Activated CD8-positive, alpha-beta T cell treated with anti-CD3 and anti-CD28 coated beads, Interleukin-2, amount 10 ng/mL, durations not matched to agents 7 days and 5 days (primary cell): ENCODE measurements at regions of chr20 and their contacts with region 1.

Region 1: DNA sequence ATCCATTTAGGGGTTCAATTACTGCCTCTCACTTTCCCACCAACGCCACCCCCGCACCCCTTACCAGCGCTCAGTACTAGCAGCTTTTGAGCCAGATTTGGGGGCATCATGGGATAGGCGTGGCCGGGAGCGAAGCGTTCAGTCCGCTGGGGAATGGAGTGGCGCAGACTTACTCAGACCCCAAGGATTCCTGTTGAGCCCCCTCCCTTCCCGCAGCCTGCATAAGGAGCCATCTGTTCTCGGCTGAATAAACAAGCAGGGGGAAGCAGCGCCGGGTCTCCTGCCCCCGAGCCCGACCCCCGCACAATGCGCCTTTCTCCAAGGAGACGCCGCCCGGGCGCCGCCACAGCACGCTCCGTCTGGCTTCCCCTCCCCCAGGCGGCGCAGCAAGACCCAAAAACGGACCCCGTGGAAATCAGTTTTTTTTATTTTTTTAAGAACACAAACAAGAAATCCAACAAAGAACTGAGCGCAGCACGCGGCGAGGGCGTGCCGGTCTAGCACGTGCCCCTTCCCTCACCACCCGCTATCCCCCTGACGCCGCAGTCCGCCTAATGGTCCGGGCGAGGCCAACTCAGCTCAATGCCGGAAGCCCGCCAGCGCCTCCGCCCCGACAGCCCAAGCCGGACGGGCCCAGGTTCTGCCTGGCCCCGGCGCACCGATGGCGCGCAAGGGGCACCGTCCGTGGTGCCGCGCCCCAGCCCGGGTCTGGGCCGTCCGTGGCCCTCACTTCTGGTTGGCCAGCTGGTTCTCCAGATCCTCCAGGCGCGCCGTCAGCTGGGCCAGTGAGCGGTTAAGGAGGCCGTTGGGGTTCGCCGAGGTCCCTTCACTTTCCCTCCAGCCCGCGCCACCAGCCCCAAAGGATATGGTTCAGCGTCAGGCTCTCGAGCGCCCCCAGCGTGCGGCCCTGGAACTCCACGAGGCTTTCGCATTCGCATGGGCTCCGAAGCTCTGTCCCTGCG is 13.3 kb upstream of the RBPJL start:
- DNase-seq: peak; percentile 87
- ATAC-seq: peak; percentile 88
- H3K4me3 Mint-ChIP-seq: peak overlapping the region; percentile 65
- H3K27ac Mint-ChIP-seq: no peak overlapping the region
- H3K4me1 Mint-ChIP-seq: peaks cover 11% of the 10 kb centered on the region
- H3K27me3 Mint-ChIP-seq: peaks cover 29% of the 10 kb centered on the region

Region 2: DNA sequence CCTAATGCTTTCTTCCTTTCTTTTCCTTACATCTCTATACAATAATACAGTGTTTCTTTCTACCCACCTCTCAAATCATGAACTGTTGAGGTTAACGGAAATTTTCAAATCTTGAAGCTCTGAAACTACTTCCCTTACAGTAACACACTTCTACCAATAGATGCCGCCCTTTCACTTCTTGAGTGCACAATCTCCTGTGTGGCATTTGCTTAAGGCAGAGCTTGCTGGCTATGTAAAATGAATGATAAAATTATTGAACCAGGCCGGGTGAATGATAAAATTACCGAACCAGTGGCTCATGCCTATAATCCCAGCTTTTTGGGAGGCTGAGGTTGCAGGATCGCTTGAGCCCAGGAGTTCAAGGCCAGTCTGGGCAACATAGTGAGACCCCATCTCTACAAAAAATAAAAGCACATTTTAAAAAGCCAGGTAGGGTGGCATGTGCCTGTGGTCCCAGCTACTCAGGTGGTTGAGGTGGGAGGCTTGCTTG is 249.2 kb before region 1 on chr20:
- CTCF ChIA-PET with region 1: interaction called, 62 read pairs
- POLR2A ChIA-PET with region 1: no interaction called
- DNase-seq: peak; percentile 67
- ATAC-seq: peak; percentile 83
- H3K4me3 Mint-ChIP-seq: no peak overlapping the region
- H3K27ac Mint-ChIP-seq: peak overlapping the region; percentile 62
- H3K4me1 Mint-ChIP-seq: peaks cover 51% of the 10 kb centered on the region
- H3K27me3 Mint-ChIP-seq: no peaks in the 10 kb centered on the region

Region 3: DNA sequence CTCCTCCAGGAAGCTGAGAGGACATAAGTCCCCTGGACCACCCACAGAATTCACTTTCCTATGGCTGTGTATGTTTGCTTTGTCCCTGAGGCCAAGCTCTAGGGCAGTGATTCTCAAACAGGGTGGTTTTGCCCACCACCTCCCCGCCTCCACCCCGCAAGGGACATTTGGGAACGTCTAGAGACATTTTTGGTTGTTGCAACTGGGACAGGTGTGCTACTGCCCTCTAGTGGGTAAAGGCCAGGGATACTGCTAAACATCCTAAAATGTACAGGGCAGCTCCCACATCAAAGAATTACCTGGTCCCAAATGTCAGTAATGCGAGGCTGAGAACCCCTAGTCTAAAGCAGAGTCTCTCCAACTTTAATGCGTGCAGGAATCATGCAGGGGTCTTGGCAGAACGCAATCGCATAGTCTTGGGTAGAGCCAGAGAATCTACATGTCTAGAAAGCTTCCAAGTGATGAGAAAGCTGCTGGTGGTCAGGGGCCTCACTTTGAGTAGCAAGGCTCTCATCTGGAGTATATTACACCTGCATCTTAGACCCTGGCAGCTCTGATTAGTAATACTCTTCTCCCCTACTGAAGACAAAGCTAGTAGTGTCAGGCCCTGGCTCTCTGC is 197.5 kb before region 1 on chr20:
- CTCF ChIA-PET with region 1: interaction called, 100 read pairs
- POLR2A ChIA-PET with region 1: no interaction called
- DNase-seq: peak; percentile 75
- ATAC-seq: peak; percentile 52
- H3K4me3 Mint-ChIP-seq: no peak overlapping the region
- H3K27ac Mint-ChIP-seq: no peak overlapping the region
- H3K4me1 Mint-ChIP-seq: peaks cover 13% of the 10 kb centered on the region
- H3K27me3 Mint-ChIP-seq: peaks cover 34% of the 10 kb centered on the region

Region 4: DNA sequence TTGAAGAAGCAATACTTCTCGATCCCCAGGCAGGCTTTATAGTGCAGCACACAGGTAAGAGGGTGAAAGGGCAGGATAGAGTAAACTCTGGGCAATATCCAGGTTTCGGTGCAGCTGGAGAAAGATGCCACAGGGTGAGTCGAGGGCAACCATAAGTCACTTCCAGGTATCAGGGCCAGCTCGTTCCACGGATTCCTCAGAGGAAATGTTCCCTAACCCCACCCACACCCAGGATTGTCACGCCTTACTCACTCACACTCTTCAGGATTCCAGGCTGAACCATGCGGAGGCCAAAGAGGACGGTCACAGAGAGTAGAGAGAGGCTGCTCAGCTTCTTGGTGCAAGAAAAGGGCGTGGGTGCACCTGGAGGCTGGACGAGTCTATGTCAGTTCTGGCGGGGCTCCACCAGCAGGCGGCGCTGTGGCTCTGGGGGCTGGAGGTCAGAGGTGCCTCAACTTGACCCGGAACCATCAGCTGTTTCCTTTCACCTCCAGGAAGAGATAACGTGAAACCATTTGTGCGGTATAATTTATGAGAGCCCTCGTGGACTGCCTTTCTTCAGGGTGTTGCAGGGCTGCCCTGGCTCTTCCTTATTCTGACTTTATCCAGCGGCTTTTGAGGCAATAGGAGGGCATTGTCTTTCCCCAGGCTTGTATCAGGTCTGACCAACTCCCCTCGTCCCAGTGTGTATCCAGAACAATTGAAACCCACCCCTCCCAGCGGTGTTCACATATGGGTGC is 154.6 kb before region 1 on chr20:
- CTCF ChIA-PET with region 1: interaction called, 21 read pairs
- POLR2A ChIA-PET with region 1: no interaction called
- DNase-seq: peak; percentile 74
- ATAC-seq: peak; percentile 74
- H3K4me3 Mint-ChIP-seq: no peak overlapping the region
- H3K27ac Mint-ChIP-seq: no peak overlapping the region
- H3K4me1 Mint-ChIP-seq: no peaks in the 10 kb centered on the region
- H3K27me3 Mint-ChIP-seq: peaks cover 7% of the 10 kb centered on the region

Region 5: GRCh38 chr20:45322952-45323383 is 29.6 kb after region 1 on chr20:
- CTCF ChIA-PET with region 1: interaction called, 88 read pairs
- POLR2A ChIA-PET with region 1: interaction called, 3 read pairs
- DNase-seq: no peak
- ATAC-seq: no peak
- H3K4me3 Mint-ChIP-seq: no peak overlapping the region
- H3K27ac Mint-ChIP-seq: no peak overlapping the region
- H3K4me1 Mint-ChIP-seq: peaks cover 40% of the 10 kb centered on the region
- H3K27me3 Mint-ChIP-seq: no peaks in the 10 kb centered on the region

Region 6: GRCh38 chr20:45450097-45450818 is 156.9 kb after region 1 on chr20:
- CTCF ChIA-PET with region 1: interaction called, 14 read pairs
- POLR2A ChIA-PET with region 1: no interaction called
- DNase-seq: peak; percentile 42
- ATAC-seq: peak; percentile 50
- H3K4me3 Mint-ChIP-seq: no peak overlapping the region
- H3K27ac Mint-ChIP-seq: no peak overlapping the region
- H3K4me1 Mint-ChIP-seq: peaks cover 17% of the 10 kb centered on the region
- H3K27me3 Mint-ChIP-seq: peaks cover 9% of the 10 kb centered on the region

Region 7: GRCh38 chr20:45771182-45771759 is 477.9 kb after region 1 on chr20:
- CTCF ChIA-PET with region 1: interaction called, 17 read pairs
- POLR2A ChIA-PET with region 1: no interaction called
- DNase-seq: peak; percentile 85
- ATAC-seq: peak; percentile 78
- H3K4me3 Mint-ChIP-seq: no peak overlapping the region
- H3K27ac Mint-ChIP-seq: no peak overlapping the region
- H3K4me1 Mint-ChIP-seq: peaks cover 5% of the 10 kb centered on the region
- H3K27me3 Mint-ChIP-seq: peaks cover 11% of the 10 kb centered on the region